Activated CD4-positive, alpha-beta memory T cell treated with anti-CD3 and anti-CD28 coated beads, Interleukin-2, amount 10 ng/mL, durations not matched to agents 7 days and 5 days (primary cell): ENCODE measurements at regions of chr15 and their contacts with region 1.

Region 1: DNA sequence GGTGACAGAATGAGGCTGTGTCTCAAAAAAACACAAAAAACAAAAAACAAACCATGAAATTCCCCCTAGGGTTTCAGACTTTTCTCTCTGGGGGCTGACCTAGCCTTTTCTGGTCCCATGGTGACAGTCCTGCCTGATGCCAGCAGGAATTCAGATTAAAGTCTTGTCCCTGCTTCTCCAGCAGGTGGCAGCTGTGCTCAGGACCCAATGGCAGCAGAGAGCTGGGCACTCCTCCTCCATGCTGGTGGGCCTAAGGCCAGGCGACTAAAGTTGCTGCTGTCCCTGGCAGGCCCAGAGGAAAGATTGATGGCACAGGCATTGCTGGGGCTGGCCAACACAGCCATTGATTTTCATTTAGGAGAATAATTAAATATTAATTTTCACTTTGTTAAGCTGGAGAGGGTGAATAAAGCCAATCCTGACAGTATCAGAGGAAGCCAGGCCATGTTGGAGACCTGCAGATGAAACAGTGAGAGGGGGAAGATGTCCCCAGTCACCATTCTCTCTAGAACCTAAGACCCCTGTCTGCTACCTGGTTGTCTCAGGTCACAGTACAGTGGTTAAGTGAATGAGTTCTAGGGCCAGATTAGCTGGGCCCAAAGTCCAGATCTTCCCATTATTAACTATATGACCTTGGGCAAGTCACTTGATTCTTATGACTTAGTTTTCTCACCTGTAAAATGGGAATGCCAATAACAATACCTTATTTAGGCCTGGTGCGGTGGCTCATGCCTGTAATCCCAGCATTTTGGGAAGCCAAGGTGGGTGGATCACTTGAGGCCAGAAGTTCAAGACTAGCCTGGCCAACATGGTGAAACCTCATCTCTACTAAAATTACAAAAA is 7.1 kb downstream of the CELF6 start:
- DNase-seq: peak; percentile 65
- H3K4me3 Mint-ChIP-seq: no peak overlapping the region
- H3K27ac Mint-ChIP-seq: no peak overlapping the region
- H3K4me1 Mint-ChIP-seq: peaks cover 2% of the 10 kb centered on the region
- H3K27me3 Mint-ChIP-seq: peaks cover 4% of the 10 kb centered on the region

Region 2: DNA sequence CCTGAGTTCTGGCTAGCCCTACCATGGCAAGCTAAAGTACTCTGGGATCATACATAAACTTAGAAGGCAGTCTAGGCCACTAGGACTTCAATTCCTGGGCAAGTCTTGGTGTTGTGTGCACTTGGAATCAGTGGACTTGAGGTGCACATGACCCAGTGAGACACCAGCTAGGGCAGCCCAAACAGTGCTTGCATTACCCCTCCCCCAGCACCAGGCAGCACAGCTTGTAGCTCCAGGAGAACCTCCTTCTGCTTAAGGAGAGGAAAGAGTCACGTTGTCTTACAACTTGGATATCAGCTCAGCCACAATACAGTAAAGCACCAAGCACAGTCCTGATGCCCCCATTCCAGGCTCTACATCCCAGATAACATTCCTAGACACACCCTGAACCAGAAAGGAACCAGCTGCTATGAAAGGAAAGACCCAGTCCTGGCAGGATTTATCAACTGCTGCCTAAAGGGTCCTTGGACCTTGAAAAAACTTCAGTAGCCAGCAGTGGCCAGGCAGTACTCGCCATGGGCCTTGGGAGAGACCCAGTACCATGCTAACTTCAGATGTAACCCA is 252.1 kb before region 1 on chr15:
- CTCF ChIA-PET with region 1: no interaction called
- POLR2A ChIA-PET with region 1: no interaction called
- DNase-seq: no peak
- H3K4me3 Mint-ChIP-seq: no peak overlapping the region
- H3K27ac Mint-ChIP-seq: no peak overlapping the region
- H3K4me1 Mint-ChIP-seq: peaks cover 1% of the 10 kb centered on the region
- H3K27me3 Mint-ChIP-seq: no peaks in the 10 kb centered on the region

Region 3: DNA sequence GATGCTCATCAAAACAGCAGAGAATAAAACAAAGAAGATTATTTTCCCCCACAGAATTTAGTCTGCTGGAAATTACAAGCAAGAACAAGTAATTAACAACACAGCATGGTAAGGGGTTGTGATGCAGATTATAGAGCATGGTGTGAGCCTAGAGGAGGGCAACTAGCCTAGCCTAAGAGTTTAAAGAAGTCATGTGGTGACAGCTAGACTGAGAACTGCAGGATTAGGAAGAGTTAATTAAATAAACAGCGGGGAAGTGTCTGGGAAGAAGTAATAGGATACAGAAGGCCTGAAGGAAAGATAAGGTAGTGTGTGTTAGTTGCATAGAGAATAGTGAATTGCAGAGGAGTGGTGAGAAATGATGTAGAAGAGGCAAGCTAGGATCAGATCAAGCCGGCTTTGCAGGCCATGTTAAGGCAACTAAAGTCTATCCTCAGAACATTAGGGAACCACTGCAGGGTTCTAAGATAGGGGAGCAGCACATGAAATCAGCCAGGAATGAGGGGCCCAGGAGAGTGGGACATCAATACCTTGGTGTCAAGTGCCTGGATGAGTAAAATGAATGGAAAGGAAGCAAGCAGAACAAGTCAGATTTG is 70.0 kb before region 1 on chr15:
- CTCF ChIA-PET with region 1: no interaction called
- POLR2A ChIA-PET with region 1: no interaction called
- DNase-seq: no peak
- H3K4me3 Mint-ChIP-seq: no peak overlapping the region
- H3K27ac Mint-ChIP-seq: no peak overlapping the region
- H3K4me1 Mint-ChIP-seq: peaks cover 5% of the 10 kb centered on the region
- H3K27me3 Mint-ChIP-seq: no peaks in the 10 kb centered on the region

Region 4: DNA sequence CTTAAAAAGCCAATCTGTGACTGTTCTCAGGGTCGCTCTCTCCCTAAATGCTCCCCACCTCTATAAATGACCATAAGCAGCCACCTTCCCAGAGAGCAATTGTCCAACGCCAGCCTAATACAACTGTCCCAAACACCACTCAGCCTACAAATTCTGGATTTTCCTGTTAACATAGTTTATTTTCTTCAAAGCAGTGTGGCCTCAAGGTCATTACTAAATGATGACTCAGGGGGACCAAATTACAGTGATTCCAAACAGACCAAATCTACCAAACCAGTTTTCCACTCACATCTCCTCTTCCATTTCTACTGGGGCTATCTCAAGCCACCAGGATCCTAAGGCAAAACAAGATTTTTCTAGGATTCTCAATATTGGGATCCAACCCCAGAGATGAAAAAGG is 40.4 kb after region 1 on chr15:
- CTCF ChIA-PET with region 1: no interaction called
- POLR2A ChIA-PET with region 1: no interaction called
- DNase-seq: no peak
- H3K4me3 Mint-ChIP-seq: no peak overlapping the region
- H3K27ac Mint-ChIP-seq: no peak overlapping the region
- H3K4me1 Mint-ChIP-seq: peaks cover 12% of the 10 kb centered on the region
- H3K27me3 Mint-ChIP-seq: no peaks in the 10 kb centered on the region

Region 5: DNA sequence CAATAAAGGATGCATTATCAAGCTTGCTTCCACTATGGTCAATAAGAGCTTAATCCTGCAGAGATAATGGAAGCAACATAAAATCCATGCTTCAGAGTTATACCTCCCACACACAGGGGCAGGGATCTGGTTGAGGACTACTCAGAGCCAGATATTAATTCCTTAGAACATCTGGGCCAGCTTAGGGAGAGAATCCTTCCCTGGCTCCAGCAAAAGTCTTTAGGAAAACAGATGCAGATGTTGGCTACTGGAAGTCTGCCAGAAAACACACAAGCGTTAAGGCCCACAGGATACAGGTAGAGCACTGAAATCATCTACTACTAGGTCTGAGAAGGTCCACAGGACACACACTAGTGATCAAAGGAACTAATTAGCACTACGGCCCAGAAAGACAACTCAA is 110.4 kb after region 1 on chr15:
- CTCF ChIA-PET with region 1: no interaction called
- POLR2A ChIA-PET with region 1: no interaction called
- DNase-seq: no peak
- H3K4me3 Mint-ChIP-seq: no peak overlapping the region
- H3K27ac Mint-ChIP-seq: no peak overlapping the region
- H3K4me1 Mint-ChIP-seq: peaks cover 2% of the 10 kb centered on the region
- H3K27me3 Mint-ChIP-seq: peaks cover 20% of the 10 kb centered on the region

Region 6: DNA sequence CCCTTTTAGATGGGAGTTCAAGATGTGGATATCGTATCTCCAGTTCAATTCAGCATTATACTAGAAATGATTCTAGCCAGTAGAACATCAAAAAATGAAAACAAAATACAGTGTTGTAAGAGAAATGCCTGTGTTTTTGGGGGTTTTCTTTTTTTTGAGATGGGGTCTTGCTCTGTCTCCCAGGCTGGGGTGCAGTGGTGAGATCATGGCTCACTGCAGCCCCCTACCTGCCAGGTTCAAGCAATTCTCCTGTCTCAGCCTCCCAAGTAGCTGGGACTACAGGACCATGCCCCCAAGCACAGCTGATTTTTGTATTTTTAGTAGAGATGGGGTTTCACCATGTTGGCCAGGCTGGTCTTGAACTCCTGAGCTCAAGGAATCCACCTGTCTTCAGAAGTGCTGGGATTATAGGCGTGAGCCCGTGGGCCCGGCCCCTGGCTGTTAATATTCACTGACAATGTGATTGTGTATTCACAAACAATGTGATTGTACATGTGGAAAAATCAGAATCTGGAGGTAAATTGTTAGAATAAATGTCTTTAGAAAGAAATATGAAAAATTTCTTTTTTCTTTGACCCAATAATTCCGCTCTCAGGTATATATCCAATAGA is 220.3 kb after region 1 on chr15:
- CTCF ChIA-PET with region 1: interaction called, 11 read pairs
- POLR2A ChIA-PET with region 1: no interaction called
- DNase-seq: no peak
- H3K4me3 Mint-ChIP-seq: no peak overlapping the region
- H3K27ac Mint-ChIP-seq: no peak overlapping the region
- H3K4me1 Mint-ChIP-seq: peaks cover 25% of the 10 kb centered on the region
- H3K27me3 Mint-ChIP-seq: no peaks in the 10 kb centered on the region